ENCODE measurements at regions of chr11 and their contacts with region 1.

Region 1: GRCh38 chr11:102346748-102347461 is at the start of gene BIRC2:
- DNase-seq: peak; percentile 90 to 96 (median 94)
- H3K4me3 ChIP-seq: peak within 1 kb of the TSS; percentile 71 to 93 (median 84)
- H3K4me3 Mint-ChIP-seq: peak within 1 kb of the TSS; percentile 93
- H3K27ac ChIP-seq: peak within 1 kb of the TSS; percentile 97 to 98
- H3K27ac Mint-ChIP-seq: peak within 1 kb of the TSS; percentile 97 to 99 (median 98)
- H3K4me1 ChIP-seq: peaks cover 10 to 24% of the 10 kb centered on the region in 2 donors
- H3K4me1 Mint-ChIP-seq: peaks cover 27% of the 10 kb centered on the region
- H3K27me3 ChIP-seq: no peaks in the 10 kb centered on the region
- H3K27me3 Mint-ChIP-seq: peaks cover 2 to 3% (median 3%) of the 10 kb centered on the region in 3 donors
- CTCF ChIP-seq: peak; percentile 65
- polyA plus RNA-seq, gene BIRC2: 25.3 to 54.7 (median 50.2) TPM

Region 2: DNA sequence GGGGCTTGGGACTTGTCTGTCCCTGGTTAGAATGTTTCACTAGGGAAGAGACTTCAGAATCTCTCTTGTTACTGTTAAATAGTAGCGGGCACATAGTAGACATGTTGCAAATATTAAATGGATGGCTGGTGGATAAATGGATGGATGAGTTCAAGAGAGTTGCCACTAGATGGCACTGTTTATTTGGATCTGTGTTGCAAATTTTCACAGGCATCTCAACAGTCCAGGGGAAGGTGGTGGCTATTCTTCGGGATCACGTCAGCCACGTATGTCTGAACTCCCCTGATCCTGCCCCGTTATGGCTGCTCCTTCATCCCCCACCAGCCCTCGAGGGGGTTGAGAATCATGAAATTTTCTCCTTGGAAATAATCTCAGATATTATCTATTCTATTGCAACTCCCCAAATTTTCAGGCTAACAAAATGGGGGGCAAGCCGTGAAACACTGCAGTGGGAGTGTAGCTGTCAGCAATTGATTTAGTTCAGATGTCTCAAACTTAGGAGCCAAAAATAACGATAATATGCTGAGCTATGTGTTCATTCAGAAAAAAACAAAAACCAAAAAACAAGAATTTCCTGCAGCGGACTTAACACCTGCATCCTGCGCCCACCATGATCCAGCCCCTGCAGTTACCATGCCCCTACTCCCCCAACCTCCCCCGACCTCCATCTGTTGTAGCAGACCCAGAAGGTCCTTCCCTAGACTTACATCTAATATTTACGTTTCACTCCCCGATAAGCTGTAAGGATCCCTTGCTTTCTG is 58.8 kb before region 1 on chr11:
- intact Hi-C with region 1: loop called (anchors 5 kb)
- DNase-seq: peak; percentile 66 to 82 (median 80)
- H3K4me3 ChIP-seq: peak overlapping the region in 1 of 3 experiments; percentile 28
- H3K4me3 Mint-ChIP-seq: peak overlapping the region in 1 of 2 donors; percentile 15
- H3K27ac ChIP-seq: peak overlapping the region in 1 of 2 donors; percentile 29
- H3K27ac Mint-ChIP-seq: peak overlapping the region; percentile 29 to 87 (median 63)
- H3K4me1 ChIP-seq: peaks cover 22 to 29% of the 10 kb centered on the region in 2 donors
- H3K4me1 Mint-ChIP-seq: peaks cover 28% of the 10 kb centered on the region
- H3K27me3 ChIP-seq: no peaks in the 10 kb centered on the region
- H3K27me3 Mint-ChIP-seq: peaks cover 2 to 3% (median 2%) of the 10 kb centered on the region in 3 donors
- CTCF ChIP-seq: peak; percentile 78

Region 3: DNA sequence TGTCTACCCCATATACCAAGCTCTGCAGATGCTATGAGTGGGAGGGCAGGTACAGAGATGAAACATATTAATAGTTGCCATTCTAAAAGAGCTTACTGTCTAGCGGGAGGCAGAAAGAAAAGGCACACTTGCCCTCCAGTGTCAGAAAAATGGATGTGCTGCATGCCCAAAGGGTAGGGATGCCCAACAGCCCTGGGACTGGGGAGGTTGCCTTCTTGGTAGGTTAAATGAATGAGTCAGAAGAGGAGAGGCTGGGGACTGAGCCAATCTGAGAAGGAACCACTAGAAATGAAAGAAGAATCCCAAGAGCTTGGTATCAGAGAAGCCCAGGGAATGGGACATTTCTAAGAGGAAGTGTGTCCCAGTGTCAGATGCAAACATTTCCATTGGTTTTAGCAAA is 28.4 kb before region 1 on chr11:
- intact Hi-C with region 1: loop called in 1 of 2 experiments (anchors 2 kb)
- DNase-seq: peak; percentile 49 to 80 (median 60)
- H3K4me3 ChIP-seq: peak overlapping the region; percentile 53 to 73 (median 73)
- H3K4me3 Mint-ChIP-seq: peak overlapping the region; percentile 94 to 97
- H3K27ac ChIP-seq: peak overlapping the region in 1 of 2 donors; percentile 98
- H3K27ac Mint-ChIP-seq: peak overlapping the region; percentile 55 to 98 (median 82)
- H3K4me1 ChIP-seq: peaks cover 25 to 48% of the 10 kb centered on the region in 2 donors
- H3K4me1 Mint-ChIP-seq: peaks cover 61% of the 10 kb centered on the region
- H3K27me3 ChIP-seq: no peaks in the 10 kb centered on the region
- H3K27me3 Mint-ChIP-seq: peaks cover 0 to 2% (median 0%) of the 10 kb centered on the region in 3 donors
- CTCF ChIP-seq: no peak

Region 4: GRCh38 chr11:102384419-102385079 is 37.6 kb after region 1 on chr11:
- intact Hi-C with region 1: no loop called
- DNase-seq: no peak
- H3K4me3 ChIP-seq: no peak overlapping the region
- H3K4me3 Mint-ChIP-seq: no peak overlapping the region
- H3K27ac ChIP-seq: no peak overlapping the region
- H3K27ac Mint-ChIP-seq: peak overlapping the region in 2 of 7 donors; percentile 43 to 50
- H3K4me1 ChIP-seq: no peaks in the 10 kb centered on the region
- H3K4me1 Mint-ChIP-seq: no peaks in the 10 kb centered on the region
- H3K27me3 ChIP-seq: no peaks in the 10 kb centered on the region
- H3K27me3 Mint-ChIP-seq: no peaks in the 10 kb centered on the region
- CTCF ChIP-seq: no peak

Region 5: DNA sequence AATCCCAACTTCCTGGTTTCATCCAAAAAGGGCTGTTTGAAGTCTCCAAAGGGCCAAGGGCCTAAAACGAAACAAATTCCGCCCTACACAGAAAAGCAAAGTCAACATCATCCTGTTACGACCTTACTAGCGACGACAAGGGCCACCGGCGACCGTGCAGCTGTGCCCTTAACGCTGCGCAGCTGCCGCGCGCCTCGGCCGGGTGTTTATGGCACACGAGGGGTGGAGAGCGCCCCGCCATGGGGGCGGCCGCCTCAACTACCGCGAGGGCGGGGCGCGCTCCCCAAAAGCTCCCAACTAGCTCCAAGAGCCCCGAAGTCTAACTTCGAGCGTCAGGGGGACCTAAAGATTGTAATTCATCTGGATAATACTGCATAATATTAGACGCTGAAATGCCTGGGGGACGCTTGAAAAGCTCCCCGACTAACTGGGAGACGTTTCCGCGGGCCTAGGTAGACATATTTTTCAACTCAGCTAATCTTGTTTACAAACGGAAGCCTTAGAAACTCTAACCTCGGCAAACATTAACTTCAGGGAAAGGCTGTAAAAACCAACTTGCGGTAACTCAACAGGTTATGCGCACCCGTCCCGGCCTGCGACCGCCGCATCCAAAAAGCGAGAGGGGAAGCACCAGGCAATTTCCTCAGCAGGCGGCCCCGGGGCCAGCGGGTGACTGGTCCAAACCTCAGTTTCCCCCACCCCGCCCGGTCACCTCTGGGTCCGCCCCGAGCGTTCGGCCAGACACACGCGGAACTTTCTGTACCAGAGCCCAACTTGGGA is 105.0 kb after region 1 on chr11:
- intact Hi-C with region 1: loop called in 1 of 2 experiments (anchors 5 kb)
- DNase-seq: peak; percentile 63 to 76 (median 75)
- H3K4me3 ChIP-seq: peak overlapping the region; percentile 73 to 88 (median 88)
- H3K4me3 Mint-ChIP-seq: peak overlapping the region; percentile 96 to 99
- H3K27ac ChIP-seq: peak overlapping the region; percentile 93 to 94
- H3K27ac Mint-ChIP-seq: peak overlapping the region; percentile 93 to 99 (median 95)
- H3K4me1 ChIP-seq: peaks cover 67 to 75% of the 10 kb centered on the region in 2 donors
- H3K4me1 Mint-ChIP-seq: peaks cover 76% of the 10 kb centered on the region
- H3K27me3 ChIP-seq: no peaks in the 10 kb centered on the region
- H3K27me3 Mint-ChIP-seq: no peaks in the 10 kb centered on the region
- CTCF ChIP-seq: no peak